ENCODE measurements at regions of chr18 and their contacts with region 1.

Region 1: GRCh38 chr18:45212181-45213039 is 402.9 kb upstream of the SLC14A2 start:
- DNase-seq: peak; percentile 66
- ATAC-seq: peak; percentile 100
- H3K4me3 Mint-ChIP-seq: no peak overlapping the region
- H3K27ac Mint-ChIP-seq: no peak overlapping the region
- H3K4me1 Mint-ChIP-seq: peaks cover 7% of the 10 kb centered on the region
- H3K27me3 Mint-ChIP-seq: no peaks in the 10 kb centered on the region
- CTCF ChIP-seq: peak; percentile 96

Region 2: DNA sequence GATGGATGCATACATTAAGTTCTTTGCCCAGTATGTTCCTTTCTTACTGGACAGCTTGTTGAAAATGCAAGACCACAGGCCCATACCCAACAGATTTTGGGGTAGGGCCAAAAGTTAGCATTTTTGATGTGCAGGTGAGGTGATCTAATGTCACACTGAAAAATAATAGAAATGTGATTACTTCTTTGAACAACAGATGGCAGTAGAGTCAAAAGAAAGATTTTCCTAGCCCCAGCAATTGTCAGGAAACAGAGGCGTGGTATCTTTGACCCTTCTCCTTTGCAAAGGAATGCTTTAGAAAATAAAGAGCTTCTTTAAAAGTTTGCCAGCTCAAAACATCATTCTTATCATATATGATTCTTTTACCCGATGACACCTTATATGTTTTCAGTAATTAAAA is 1591.5 kb before region 1 on chr18:
- CTCF ChIA-PET with region 1: no interaction called
- POLR2A ChIA-PET with region 1: no interaction called
- intact Hi-C with region 1: loop called (anchors 1 kb)
- DNase-seq: no peak
- ATAC-seq: no peak
- H3K4me3 Mint-ChIP-seq: no peak overlapping the region
- H3K27ac Mint-ChIP-seq: no peak overlapping the region
- H3K4me1 Mint-ChIP-seq: no peaks in the 10 kb centered on the region
- H3K27me3 Mint-ChIP-seq: peaks cover 5% of the 10 kb centered on the region
- CTCF ChIP-seq: no peak

Region 3: DNA sequence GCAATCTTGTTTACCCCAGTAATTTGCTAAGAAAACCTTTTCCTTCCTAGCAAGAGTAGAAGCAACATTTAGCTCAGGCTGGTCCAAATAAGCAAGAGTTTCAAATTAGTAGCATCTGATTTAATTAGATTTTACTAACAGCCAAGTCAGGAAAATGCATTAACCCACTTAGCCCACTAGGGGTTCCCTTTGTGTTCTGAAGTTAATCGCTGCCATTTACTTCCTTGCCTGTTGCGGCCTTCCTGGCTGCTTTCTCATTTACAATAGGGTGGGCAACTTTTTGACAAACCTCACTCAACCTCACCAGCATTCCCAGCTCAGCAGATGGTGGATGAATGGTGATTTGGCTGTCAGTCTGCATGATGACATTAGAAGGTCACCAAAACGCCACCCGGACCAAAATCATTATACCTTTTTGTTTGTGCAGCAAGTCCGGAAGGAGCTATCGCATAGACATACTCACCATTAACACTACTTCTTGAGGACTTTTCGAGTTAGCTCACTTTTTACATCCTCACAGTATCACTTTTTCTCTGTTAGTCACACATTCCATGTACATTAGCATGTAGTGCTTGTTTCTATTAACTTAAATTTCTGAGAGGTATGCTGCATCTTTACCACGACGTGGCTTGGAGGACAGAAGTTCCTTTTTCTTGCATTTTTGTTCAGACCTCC is 633.2 kb before region 1 on chr18:
- CTCF ChIA-PET with region 1: interaction called, 4 read pairs
- POLR2A ChIA-PET with region 1: no interaction called
- intact Hi-C with region 1: loop called (anchors 1 kb)
- DNase-seq: no peak
- ATAC-seq: no peak
- H3K4me3 Mint-ChIP-seq: no peak overlapping the region
- H3K27ac Mint-ChIP-seq: no peak overlapping the region
- H3K4me1 Mint-ChIP-seq: peaks cover 20% of the 10 kb centered on the region
- H3K27me3 Mint-ChIP-seq: no peaks in the 10 kb centered on the region
- CTCF ChIP-seq: peak; percentile 39

Region 4: GRCh38 chr18:44823782-44824181 is 388.6 kb before region 1 on chr18:
- CTCF ChIA-PET with region 1: interaction called, 4 read pairs
- POLR2A ChIA-PET with region 1: no interaction called
- intact Hi-C with region 1: loop called (anchors 1 kb)
- DNase-seq: no peak
- ATAC-seq: peak; percentile 38
- H3K4me3 Mint-ChIP-seq: no peak overlapping the region
- H3K27ac Mint-ChIP-seq: no peak overlapping the region
- H3K4me1 Mint-ChIP-seq: peaks cover 67% of the 10 kb centered on the region
- H3K27me3 Mint-ChIP-seq: no peaks in the 10 kb centered on the region
- CTCF ChIP-seq: no peak

Region 5: GRCh38 chr18:44973282-44973681 is 239.1 kb before region 1 on chr18:
- CTCF ChIA-PET with region 1: interaction called, 3 read pairs
- POLR2A ChIA-PET with region 1: no interaction called
- intact Hi-C with region 1: loop called (anchors 2 kb)
- DNase-seq: no peak
- ATAC-seq: no peak
- H3K4me3 Mint-ChIP-seq: no peak overlapping the region
- H3K27ac Mint-ChIP-seq: no peak overlapping the region
- H3K4me1 Mint-ChIP-seq: peaks cover 22% of the 10 kb centered on the region
- H3K27me3 Mint-ChIP-seq: no peaks in the 10 kb centered on the region
- CTCF ChIP-seq: no peak

Region 6: DNA sequence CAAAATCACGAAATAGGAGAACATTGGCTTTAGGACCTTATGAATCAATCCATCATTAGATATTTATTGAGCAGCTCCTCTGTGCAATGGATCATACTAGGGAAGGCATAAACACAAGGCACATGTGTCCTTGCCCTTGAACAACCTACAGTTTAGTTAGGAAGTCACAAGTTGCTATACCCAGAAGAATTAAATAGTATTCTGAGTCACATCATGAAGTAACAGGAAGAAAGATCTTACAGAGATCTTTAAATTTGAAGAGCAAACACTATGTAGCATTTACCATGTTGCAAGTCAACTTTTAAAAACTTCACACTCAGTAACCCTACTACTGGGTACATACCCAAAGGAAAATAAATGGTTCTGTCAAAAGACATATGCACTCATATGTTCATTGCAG is 47.7 kb after region 1 on chr18:
- CTCF ChIA-PET with region 1: no interaction called
- POLR2A ChIA-PET with region 1: no interaction called
- intact Hi-C with region 1: no loop called
- DNase-seq: no peak
- ATAC-seq: no peak
- H3K4me3 Mint-ChIP-seq: no peak overlapping the region
- H3K27ac Mint-ChIP-seq: no peak overlapping the region
- H3K4me1 Mint-ChIP-seq: no peaks in the 10 kb centered on the region
- H3K27me3 Mint-ChIP-seq: peaks cover 34% of the 10 kb centered on the region
- CTCF ChIP-seq: no peak

Region 7: GRCh38 chr18:45324495-45325113 is 112.2 kb after region 1 on chr18:
- CTCF ChIA-PET with region 1: no interaction called
- POLR2A ChIA-PET with region 1: no interaction called
- intact Hi-C with region 1: no loop called
- DNase-seq: no peak
- ATAC-seq: no peak
- H3K4me3 Mint-ChIP-seq: no peak overlapping the region
- H3K27ac Mint-ChIP-seq: no peak overlapping the region
- H3K4me1 Mint-ChIP-seq: no peaks in the 10 kb centered on the region
- H3K27me3 Mint-ChIP-seq: peaks cover 29% of the 10 kb centered on the region
- CTCF ChIP-seq: no peak

Region 8: DNA sequence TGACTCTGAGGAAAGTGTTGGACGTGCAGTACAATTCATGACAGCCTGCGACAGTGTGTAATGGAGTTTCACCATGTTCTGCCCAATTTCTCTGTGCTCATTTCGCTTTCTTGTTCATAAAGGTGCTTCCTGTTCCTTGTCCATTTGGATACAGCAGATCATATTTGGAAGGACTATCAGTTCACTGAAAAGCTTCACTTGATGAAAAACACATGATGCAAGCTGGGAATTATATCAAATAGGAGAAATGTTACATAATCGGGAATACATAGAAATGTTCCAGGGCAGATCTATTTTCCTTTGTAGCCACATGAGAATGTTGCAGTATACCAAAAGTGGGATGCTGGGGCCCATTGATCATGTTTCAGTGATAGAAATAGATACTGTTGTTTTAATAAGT is 136.6 kb after region 1 on chr18:
- CTCF ChIA-PET with region 1: no interaction called
- POLR2A ChIA-PET with region 1: no interaction called
- intact Hi-C with region 1: no loop called
- DNase-seq: no peak
- ATAC-seq: no peak
- H3K4me3 Mint-ChIP-seq: no peak overlapping the region
- H3K27ac Mint-ChIP-seq: no peak overlapping the region
- H3K4me1 Mint-ChIP-seq: no peaks in the 10 kb centered on the region
- H3K27me3 Mint-ChIP-seq: peaks cover 2% of the 10 kb centered on the region
- CTCF ChIP-seq: no peak

Region 9: GRCh38 chr18:45384137-45384961 is 171.9 kb after region 1 on chr18:
- CTCF ChIA-PET with region 1: interaction called, 5 read pairs
- POLR2A ChIA-PET with region 1: no interaction called
- intact Hi-C with region 1: loop called (anchors 1 kb)
- DNase-seq: peak; percentile 27
- ATAC-seq: peak; percentile 62
- H3K4me3 Mint-ChIP-seq: no peak overlapping the region
- H3K27ac Mint-ChIP-seq: no peak overlapping the region
- H3K4me1 Mint-ChIP-seq: no peaks in the 10 kb centered on the region
- H3K27me3 Mint-ChIP-seq: peaks cover 12% of the 10 kb centered on the region
- CTCF ChIP-seq: no peak

Measured in activated B cell treated with CpG ODN at 0.5 μM for 24 hours (primary cell).